Activated CD8-positive, alpha-beta T cell treated with anti-CD3 and anti-CD28 coated beads, Interleukin-2, amount 10 ng/mL, durations not matched to agents 7 days and 5 days (primary cell): ENCODE measurements at regions of chr17 and their contacts with region 1.

Region 1: GRCh38 chr17:82518826-82519810 is at the start of gene FOXK2:
- DNase-seq: peak; percentile 93
- ATAC-seq: peak; percentile 99
- H3K4me3 Mint-ChIP-seq: peak within 1 kb of the TSS; percentile 89
- H3K27ac Mint-ChIP-seq: peak within 1 kb of the TSS; percentile 87
- H3K4me1 Mint-ChIP-seq: peaks cover 24% of the 10 kb centered on the region
- H3K27me3 Mint-ChIP-seq: no peaks in the 10 kb centered on the region
- total RNA-seq, gene FOXK2: 62.3 to 65.3 TPM

Region 2: DNA sequence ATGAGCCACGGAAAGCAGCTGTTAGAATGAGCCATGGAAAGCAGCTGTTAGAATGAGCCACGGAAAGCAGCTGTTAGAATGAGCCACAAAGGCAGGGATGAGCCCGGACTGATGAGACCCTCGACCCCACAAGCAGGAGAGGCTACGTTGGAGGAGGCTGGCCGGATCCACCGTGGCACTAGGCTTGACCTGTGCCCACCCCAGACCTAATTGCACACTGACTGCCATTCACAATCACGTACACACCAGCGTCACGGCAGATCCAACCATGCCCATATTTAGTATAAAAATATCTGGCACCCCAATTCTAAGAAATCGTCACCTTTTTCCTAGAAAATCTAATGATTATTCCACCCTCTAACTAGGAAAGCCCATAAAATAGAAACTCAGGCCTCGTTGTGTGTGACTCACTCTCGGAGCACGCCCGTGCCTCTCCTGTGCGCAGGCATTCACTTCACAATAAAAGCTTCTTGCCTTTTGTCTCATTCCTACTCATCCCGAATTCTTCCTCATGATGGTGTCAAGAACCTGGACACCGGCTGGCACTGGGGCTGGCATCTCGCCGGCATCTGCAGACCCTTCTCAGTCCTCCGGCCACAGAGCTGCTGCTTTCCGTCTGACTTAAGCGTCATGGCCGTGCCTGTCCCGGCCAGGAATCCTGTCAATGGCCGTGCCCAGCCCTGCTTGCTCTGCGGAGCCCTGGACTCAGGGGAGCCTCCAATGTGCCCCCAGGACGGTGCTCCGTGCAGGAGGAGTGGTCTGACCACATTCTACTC is 180.1 kb before region 1 on chr17:
- CTCF ChIA-PET with region 1: no interaction called
- POLR2A ChIA-PET with region 1: no interaction called
- DNase-seq: no peak
- ATAC-seq: no peak
- H3K4me3 Mint-ChIP-seq: no peak overlapping the region
- H3K27ac Mint-ChIP-seq: no peak overlapping the region
- H3K4me1 Mint-ChIP-seq: peaks cover 19% of the 10 kb centered on the region
- H3K27me3 Mint-ChIP-seq: peaks cover 3% of the 10 kb centered on the region

Region 3: DNA sequence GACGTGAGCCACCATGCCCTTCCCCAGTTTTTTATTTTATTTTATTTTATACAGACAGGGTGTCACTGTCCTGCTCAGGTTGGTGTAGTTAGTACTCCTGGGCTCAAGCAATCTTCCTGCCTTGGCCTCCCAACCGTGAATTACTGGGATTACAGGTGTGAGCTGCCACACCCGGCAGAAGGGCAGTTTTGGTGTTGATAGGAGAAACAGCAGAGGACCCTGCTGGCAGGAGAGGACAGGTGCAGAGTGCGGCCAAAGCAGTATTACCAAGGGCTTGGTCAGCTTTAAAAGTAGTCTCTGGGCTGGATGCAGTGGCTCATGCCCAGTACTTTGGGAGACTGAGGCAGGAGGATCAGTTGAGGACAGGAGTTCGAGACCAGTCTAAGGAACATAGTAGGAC is 23.3 kb after region 1 on chr17:
- CTCF ChIA-PET with region 1: no interaction called
- POLR2A ChIA-PET with region 1: no interaction called
- DNase-seq: no peak
- ATAC-seq: no peak
- H3K4me3 Mint-ChIP-seq: no peak overlapping the region
- H3K27ac Mint-ChIP-seq: no peak overlapping the region
- H3K4me1 Mint-ChIP-seq: peaks cover 16% of the 10 kb centered on the region
- H3K27me3 Mint-ChIP-seq: no peaks in the 10 kb centered on the region

Region 4: DNA sequence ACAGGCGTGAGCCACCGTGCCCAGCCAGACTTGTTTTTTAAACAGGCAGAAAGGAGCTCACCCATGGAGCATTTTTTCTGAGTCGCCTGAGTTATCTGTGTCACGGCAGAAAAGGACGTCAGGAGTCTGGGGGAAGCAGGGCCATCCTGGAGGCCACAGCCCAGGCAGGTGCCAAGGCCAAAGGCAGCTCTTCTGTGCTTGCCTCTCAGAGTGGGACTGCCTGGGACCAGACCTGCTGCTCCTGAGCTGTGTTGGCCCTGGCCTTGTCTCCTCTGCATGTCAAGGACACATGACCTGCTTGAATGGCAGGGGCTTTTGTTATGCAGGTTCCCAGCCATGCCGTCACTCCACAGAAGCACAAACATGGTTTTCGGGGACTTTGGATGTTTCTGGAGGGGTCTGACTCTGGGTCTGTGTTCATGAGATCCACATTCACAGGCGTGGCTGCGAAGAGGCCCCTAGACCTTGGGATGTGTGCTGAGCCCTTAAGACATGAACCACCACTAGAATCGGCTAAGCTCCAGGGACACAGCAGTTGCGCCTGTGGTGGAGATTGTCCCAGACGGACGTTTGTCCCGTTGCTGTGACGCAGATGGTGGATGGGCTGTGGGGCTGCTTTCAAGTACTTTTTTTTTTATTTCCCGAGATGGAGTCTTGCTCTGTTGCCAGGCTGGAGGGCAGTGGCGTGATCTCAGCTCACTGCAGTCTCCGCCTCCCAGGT is 34.3 kb after region 1 on chr17:
- CTCF ChIA-PET with region 1: interaction called, 16 read pairs
- POLR2A ChIA-PET with region 1: no interaction called
- DNase-seq: no peak
- ATAC-seq: no peak
- H3K4me3 Mint-ChIP-seq: no peak overlapping the region
- H3K27ac Mint-ChIP-seq: no peak overlapping the region
- H3K4me1 Mint-ChIP-seq: peaks cover 23% of the 10 kb centered on the region
- H3K27me3 Mint-ChIP-seq: no peaks in the 10 kb centered on the region